Transverse colon (tissue), 4 donors: ENCODE measurements at regions of chr11 and their contacts with region 1.

Region 1: GRCh38 chr11:27040302-27041115 is at the start of gene BBOX1:
- DNase-seq: no peak
- H3K4me3 ChIP-seq: no peak within 1 kb of the TSS
- H3K27ac ChIP-seq: no peak within 1 kb of the TSS
- H3K4me1 ChIP-seq: peaks cover 0 to 6% (median 0%) of the 10 kb centered on the region in 4 donors
- H3K27me3 ChIP-seq: no peaks in the 10 kb centered on the region
- CTCF ChIP-seq: no peak
- EP300 ChIP-seq: no peak
- POLR2A ChIP-seq: no peak
- total RNA-seq, gene BBOX1: not detected

Region 2: DNA sequence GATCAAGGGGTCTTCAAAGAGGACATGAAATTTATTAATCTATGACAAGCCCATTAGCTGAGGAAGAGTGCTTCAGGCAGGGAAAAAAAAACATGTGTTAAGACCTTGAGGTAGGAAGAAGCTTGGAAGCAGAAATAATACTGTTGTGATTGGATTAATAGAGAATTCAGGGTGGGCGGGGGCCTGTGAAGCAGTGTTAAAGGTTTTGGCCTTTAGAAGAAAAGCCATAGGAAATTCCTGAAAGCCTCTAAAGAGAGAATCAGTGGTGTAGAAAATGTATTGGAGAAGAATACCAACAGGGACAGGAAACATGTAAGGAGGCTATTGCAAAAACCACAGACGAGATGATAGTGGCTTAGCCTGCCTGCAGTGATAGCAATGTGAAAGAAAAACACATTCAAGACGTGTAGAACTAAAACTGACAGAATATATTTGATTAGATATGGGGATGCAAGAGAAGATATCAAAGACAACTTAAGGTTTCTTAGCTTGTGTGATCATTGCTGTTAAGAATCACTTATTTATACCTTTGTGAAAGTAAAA is 1113.0 kb before region 1 on chr11:
- in situ Hi-C with region 1: no loop called
- intact Hi-C with region 1: loop called (anchors 5 kb)
- DNase-seq: no peak
- H3K4me3 ChIP-seq: no peak overlapping the region
- H3K27ac ChIP-seq: no peak overlapping the region
- H3K4me1 ChIP-seq: peaks cover 0 to 13% (median 4%) of the 10 kb centered on the region in 4 donors
- H3K27me3 ChIP-seq: no peaks in the 10 kb centered on the region
- CTCF ChIP-seq: no peak
- EP300 ChIP-seq: no peak
- POLR2A ChIP-seq: no peak

Region 3: GRCh38 chr11:26418386-26418912 is 622.1 kb before region 1 on chr11:
- in situ Hi-C with region 1: no loop called
- intact Hi-C with region 1: no loop called
- DNase-seq: no peak
- H3K4me3 ChIP-seq: no peak overlapping the region
- H3K27ac ChIP-seq: no peak overlapping the region
- H3K4me1 ChIP-seq: no peaks in the 10 kb centered on the region
- H3K27me3 ChIP-seq: no peaks in the 10 kb centered on the region
- CTCF ChIP-seq: no peak
- EP300 ChIP-seq: no peak
- POLR2A ChIP-seq: no peak

Region 4: DNA sequence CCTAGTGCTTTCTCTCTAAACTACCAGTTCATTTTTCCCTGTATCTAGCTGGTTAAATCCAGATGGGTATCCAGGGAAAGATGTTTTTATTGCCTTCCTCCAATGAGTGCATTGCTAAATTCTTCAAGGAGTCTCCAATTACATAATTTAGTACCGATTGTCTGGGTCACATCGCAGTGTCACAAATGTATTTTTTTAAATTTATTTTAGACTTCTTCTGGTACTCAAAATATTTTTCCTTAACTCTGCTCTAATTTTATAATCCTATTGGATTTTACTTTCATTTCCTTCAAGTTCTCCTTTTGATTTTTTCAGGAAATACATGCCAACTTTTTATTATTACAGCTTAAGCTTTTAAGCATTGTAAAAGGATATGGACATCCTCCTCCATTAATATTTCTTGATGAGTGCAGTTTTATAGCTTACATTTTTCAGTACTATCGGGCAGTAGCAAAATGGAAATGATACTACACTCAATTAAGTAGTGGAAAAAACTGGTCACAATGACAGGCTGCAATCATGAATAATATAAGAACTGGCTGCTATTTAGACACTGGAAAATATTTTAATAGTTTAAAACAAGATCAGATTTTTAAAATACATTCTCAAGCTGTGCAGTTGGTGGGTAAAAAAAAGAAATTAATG is 20.4 kb after region 1 on chr11:
- in situ Hi-C with region 1: no loop called
- intact Hi-C with region 1: loop called (anchors 1 kb)
- DNase-seq: no peak
- H3K4me3 ChIP-seq: no peak overlapping the region
- H3K27ac ChIP-seq: no peak overlapping the region
- H3K4me1 ChIP-seq: peaks cover 0 to 3% (median 0%) of the 10 kb centered on the region in 4 donors
- H3K27me3 ChIP-seq: no peaks in the 10 kb centered on the region
- CTCF ChIP-seq: no peak
- EP300 ChIP-seq: no peak
- POLR2A ChIP-seq: no peak